Transverse colon (tissue), 4 donors: ENCODE measurements at regions of chr1 and their contacts with region 1.

Region 1: GRCh38 chr1:42723501-42723900 is 16.5 kb downstream of the CLDN19 start:
- DNase-seq: no peak
- H3K4me3 ChIP-seq: no peak overlapping the region
- H3K27ac ChIP-seq: no peak overlapping the region
- H3K4me1 ChIP-seq: no peaks in the 10 kb centered on the region
- H3K27me3 ChIP-seq: no peaks in the 10 kb centered on the region
- CTCF ChIP-seq: no peak
- EP300 ChIP-seq: no peak
- POLR2A ChIP-seq: no peak

Region 2: DNA sequence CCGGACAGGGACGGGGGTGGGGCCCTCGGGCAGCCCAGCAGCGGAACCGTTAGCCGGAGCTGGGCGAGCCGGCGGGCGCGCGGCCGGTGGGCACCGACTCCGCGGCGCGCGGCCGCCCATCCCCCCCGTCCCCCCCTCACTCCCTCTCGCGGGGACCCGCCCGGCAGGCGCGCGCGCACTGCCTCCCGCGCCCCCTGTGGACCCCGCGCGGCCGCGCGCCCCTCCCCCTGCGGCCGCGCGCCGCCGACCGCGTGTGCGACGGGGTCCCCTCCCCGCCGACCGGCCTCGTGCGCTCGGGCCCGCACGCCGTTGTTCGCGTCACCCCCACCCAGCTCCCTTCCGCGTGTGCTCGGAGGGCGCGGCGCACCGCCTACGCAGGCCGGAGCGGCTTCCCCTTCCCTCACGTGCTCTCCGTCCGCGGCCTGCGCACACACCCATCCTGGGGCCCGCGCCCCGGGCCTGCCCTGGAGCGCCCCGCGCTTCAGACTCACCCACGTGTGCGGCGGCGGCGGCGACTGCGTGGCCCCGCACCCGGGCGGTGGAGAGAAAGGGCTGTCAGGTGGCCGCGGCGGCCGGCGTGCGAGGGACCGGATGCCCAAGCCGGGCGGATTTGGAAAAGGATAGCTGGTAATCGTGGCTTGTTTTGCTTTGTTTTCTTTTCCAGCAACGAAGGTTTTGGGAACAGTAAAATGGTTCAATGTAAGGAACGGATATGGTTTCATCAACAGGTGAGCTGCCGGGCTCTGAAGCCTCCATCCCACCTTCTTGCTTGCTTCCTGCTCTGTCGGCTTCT is 40.6 kb before region 1 on chr1:
- in situ Hi-C with region 1: no loop called
- intact Hi-C with region 1: no loop called
- DNase-seq: peak; percentile 87
- H3K4me3 ChIP-seq: peak overlapping the region; percentile 82 to 96 (median 89)
- H3K27ac ChIP-seq: peak overlapping the region; percentile 96 to 98 (median 98)
- H3K4me1 ChIP-seq: peaks cover 43 to 57% (median 54%) of the 10 kb centered on the region in 4 donors
- H3K27me3 ChIP-seq: no peaks in the 10 kb centered on the region
- CTCF ChIP-seq: no peak
- EP300 ChIP-seq: no peak
- POLR2A ChIP-seq: peak; percentile 39

Region 3: GRCh38 chr1:42700006-42700405 is 23.5 kb before region 1 on chr1:
- in situ Hi-C with region 1: no loop called
- intact Hi-C with region 1: loop called (anchors 1 kb)
- DNase-seq: no peak
- H3K4me3 ChIP-seq: no peak overlapping the region
- H3K27ac ChIP-seq: no peak overlapping the region
- H3K4me1 ChIP-seq: peaks cover 0 to 5% (median 0%) of the 10 kb centered on the region in 4 donors
- H3K27me3 ChIP-seq: no peaks in the 10 kb centered on the region
- CTCF ChIP-seq: no peak
- EP300 ChIP-seq: no peak
- POLR2A ChIP-seq: no peak